Activated CD4-positive, alpha-beta memory T cell treated with anti-CD3 and anti-CD28 coated beads, Interleukin-2, amount 10 ng/mL, durations not matched to agents 7 days and 5 days (primary cell): ENCODE measurements at regions of chr18 and their contacts with region 1.

Region 1: GRCh38 chr18:63367053-63367953 is at the start of gene KDSR:
- DNase-seq: peak; percentile 87
- H3K4me3 Mint-ChIP-seq: peak within 1 kb of the TSS; percentile 92
- H3K27ac Mint-ChIP-seq: peak within 1 kb of the TSS; percentile 77
- H3K4me1 Mint-ChIP-seq: peaks cover 48% of the 10 kb centered on the region
- H3K27me3 Mint-ChIP-seq: no peaks in the 10 kb centered on the region
- total RNA-seq, gene KDSR: 60.9 to 66.4 TPM

Region 2: DNA sequence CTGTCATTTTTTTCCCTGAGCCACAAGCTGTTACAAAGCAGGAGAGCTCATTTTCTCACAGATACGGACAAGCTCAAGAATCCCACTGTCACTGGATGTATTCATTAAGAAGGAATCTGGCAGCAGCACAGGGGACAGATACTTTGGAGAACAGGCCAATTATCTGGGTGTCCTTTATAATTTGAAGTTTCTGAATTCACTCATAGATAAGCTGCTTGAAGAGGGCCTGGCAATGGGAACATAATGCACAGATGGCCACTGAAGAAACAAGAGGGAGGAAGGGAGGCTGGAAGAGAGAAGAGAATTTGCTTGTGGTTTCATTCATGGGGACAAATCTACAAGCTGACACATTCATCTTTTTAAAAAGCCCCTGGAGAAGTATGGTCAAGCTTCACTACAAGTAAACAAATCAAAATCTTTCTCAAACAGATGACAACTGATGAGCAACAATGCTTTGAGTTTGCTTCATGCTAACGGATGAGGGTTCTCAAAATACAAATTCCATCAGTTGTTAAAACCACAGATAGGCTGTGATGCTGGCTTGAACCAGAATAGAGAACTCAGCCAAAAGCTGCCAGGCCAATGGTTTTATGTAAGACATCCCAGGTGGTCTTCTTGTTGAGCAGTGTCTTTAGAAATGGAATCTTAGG is 59.6 kb before region 1 on chr18:
- CTCF ChIA-PET with region 1: no interaction called
- POLR2A ChIA-PET with region 1: no interaction called
- DNase-seq: no peak
- H3K4me3 Mint-ChIP-seq: no peak overlapping the region
- H3K27ac Mint-ChIP-seq: no peak overlapping the region
- H3K4me1 Mint-ChIP-seq: peaks cover 84% of the 10 kb centered on the region
- H3K27me3 Mint-ChIP-seq: no peaks in the 10 kb centered on the region

Region 3: GRCh38 chr18:63339920-63340484 is 27.3 kb before region 1 on chr18:
- CTCF ChIA-PET with region 1: interaction called, 13 read pairs
- POLR2A ChIA-PET with region 1: interaction called, 3 read pairs
- DNase-seq: peak; percentile 34
- H3K4me3 Mint-ChIP-seq: no peak overlapping the region
- H3K27ac Mint-ChIP-seq: no peak overlapping the region
- H3K4me1 Mint-ChIP-seq: peaks cover 7% of the 10 kb centered on the region
- H3K27me3 Mint-ChIP-seq: no peaks in the 10 kb centered on the region

Region 4: DNA sequence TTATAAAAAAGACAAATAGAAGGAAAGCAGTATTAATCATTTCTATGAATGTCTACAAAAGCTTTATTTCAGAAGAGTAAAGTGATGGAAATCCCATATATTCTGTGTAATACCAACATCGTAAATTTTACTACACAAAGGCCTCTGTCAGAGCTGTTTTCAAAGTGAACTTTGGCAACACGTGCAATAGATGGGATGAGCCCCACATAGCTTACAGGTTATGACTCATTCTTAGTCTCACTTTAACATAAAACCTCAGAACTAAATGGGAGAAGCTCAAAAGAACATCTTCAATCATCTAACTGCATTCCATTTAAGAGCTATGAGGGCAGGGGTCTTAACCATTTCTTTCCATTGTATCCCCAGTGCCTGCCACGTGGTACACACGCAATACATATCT is 43.5 kb after region 1 on chr18:
- CTCF ChIA-PET with region 1: interaction called, 4 read pairs
- POLR2A ChIA-PET with region 1: interaction called, 34 read pairs
- DNase-seq: no peak
- H3K4me3 Mint-ChIP-seq: peak overlapping the region; percentile 9
- H3K27ac Mint-ChIP-seq: peak overlapping the region; percentile 73
- H3K4me1 Mint-ChIP-seq: peaks cover 70% of the 10 kb centered on the region
- H3K27me3 Mint-ChIP-seq: no peaks in the 10 kb centered on the region

Region 5: DNA sequence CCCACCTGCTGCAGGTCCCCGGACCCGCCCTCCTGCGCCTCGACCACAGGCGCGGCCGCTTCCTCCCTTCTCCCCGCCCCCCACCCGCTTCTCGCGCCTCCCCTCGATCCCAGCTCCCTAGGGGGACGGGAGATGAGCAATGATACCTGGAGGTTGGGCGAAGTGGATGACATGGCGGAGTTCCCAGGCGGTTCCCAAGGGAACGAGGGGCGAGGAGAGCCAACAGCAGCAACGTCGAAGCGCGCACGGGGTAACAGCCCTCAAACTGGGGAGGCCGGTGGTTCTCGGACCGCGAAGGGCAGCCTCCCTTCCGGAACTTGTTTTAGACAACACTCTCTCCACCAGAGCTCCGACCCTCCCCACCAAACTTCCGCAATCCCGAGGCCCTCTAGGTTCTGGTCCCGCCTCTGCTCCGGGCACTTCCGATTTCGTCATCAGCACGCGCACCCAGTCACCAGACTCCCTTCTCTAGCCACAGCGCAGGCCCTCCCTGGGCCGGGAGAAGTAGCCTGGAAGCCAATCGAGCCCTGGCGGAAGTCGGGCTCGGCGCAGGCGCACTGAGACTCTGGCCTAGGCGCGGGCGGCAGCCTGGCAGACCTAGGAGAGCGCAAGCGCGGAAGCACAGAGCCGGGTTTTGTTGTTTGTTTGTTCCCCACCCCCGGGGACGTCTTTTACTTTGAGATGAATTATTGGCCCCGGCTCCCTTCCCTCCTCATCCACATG is 54.9 kb after region 1 on chr18 and contains the start of gene VPS4B:
- CTCF ChIA-PET with region 1: interaction called, 3 read pairs
- POLR2A ChIA-PET with region 1: interaction called, 49 read pairs
- DNase-seq: peak; percentile 100
- H3K4me3 Mint-ChIP-seq: peak within 1 kb of the TSS; percentile 89
- H3K27ac Mint-ChIP-seq: peak within 1 kb of the TSS; percentile 91
- H3K4me1 Mint-ChIP-seq: peaks cover 36% of the 10 kb centered on the region
- H3K27me3 Mint-ChIP-seq: no peaks in the 10 kb centered on the region
- total RNA-seq, gene VPS4B: 72.4 to 77.0 TPM